Activated CD4-positive, alpha-beta memory T cell treated with anti-CD3 and anti-CD28 coated beads for 36 hours (primary cell): ENCODE measurements at regions of chr7 and their contacts with region 1.

Region 1: DNA sequence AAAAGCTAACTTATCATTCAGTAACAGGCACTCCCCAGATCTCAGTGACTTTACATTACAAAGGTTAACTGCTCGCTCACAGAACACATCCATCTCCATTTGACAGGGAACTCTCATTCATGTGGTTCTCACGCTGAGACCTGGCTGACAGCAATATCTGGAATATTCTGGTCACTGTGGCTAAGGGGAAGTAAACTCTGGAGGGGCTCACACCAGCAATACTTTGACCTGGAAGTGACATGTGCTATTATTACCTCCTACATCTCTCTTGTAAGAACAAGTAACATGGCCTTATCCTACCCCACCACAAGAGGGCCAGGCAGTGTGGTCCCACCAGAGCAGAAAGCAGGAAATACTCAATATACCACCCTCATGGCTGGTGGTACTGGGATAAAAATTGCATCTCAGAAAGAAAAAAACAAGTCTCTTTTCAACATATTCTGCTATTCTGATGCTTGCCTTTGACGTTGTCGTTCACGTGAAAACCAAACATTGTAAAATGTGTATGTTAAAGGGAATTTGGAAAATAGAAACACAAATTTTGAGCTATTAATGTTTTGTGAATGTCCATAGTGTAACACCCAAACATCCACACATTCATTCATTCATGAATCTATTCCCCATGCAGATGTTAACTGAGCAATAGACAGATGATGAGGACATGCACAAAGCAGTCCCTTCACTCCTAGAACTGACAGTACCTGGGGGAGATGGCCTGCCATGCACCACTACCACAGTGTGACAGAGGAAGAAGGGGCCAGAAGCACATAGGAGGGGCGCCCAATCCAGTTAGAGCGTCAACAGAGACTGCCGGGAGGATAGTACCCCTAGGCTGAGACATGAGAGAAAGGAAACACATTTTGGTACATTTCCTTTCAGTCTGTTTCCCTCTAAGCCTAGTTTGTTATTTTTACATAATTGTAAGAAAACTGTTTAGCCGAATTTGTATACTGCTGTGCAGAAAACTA is 166.0 kb upstream of the SP4 start:
- DNase-seq: peak; percentile 55
- H3K4me3 Mint-ChIP-seq: no peak overlapping the region
- H3K27ac Mint-ChIP-seq: no peak overlapping the region
- H3K4me1 Mint-ChIP-seq: peaks cover 8% of the 10 kb centered on the region
- H3K27me3 Mint-ChIP-seq: peaks cover 3% of the 10 kb centered on the region

Region 2: DNA sequence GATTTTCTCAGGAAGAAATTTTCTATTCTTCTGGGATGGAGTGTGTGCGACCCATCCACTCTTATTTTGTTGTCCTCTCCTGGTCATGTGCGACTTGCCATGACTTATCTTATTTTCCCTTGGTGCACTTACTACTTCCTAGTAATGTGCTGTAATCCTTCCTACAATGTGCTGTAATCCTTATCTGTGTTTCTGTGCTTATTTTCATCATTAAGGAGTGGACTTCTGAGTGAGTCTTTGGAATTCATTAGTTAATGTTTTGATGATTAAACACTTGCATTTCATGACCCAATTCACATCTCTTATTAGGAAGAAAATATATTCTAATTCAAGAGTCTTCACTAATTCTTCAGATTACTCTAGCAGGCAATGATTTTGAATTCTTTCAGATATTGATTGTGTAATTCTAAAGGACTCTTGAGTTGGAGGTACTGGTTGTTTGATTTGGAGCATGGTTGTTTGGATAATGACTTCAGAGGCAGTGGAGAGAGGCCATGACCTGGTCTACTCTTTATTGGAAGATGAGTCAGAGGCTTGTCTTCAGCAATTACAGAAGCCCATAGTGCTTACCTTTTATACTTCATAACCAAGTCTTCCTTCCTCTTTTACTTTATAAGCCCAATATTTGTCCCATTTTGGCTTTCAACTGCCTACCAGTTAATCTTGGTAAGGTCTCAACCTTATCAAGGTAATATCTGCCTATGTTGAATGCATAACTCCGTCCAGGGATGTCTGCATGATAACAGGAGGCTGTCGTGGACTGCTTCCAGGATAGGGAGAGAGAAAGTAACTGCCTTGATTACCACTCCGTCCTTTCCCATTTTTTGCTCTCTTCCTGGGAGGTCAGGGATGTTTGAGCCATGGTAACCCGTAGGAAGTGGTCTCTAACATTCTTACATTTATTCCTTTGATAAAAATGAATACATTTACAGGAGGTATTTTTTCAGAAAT is 196.9 kb before region 1 on chr7:
- CTCF ChIA-PET with region 1: no interaction called
- POLR2A ChIA-PET with region 1: no interaction called
- intact Hi-C with region 1: no loop called
- DNase-seq: no peak
- H3K4me3 Mint-ChIP-seq: no peak overlapping the region
- H3K27ac Mint-ChIP-seq: no peak overlapping the region
- H3K4me1 Mint-ChIP-seq: no peaks in the 10 kb centered on the region
- H3K27me3 Mint-ChIP-seq: peaks cover 3% of the 10 kb centered on the region

Region 3: DNA sequence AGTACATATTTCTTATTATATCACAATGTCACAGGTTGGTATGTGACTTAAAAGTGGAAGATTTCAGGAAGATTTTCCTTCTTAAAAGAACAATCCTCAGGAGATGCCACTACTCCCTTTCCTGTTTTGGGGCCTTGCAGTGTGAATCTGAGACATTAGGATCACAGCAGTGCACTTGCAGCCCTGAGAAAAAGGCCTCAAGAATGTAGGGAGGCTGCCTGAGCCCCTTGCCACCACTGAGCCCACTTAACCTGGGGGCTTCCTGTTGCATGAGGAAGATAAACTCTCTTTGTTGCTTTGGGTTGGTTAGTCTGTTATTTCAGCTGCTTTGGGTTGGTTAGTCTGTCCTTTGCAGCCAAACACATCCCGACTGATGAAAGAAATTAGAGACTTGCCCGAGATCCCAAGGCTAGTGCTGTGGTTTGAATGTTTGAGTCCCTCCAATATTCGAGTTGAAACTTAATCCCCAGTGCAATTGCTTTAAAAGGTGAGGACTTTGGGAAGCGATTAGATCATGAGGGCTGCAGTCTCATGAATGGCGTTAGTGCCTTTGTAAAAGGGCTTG is 14.6 kb after region 1 on chr7:
- CTCF ChIA-PET with region 1: interaction called, 14 read pairs
- POLR2A ChIA-PET with region 1: no interaction called
- intact Hi-C with region 1: no loop called
- DNase-seq: no peak
- H3K4me3 Mint-ChIP-seq: no peak overlapping the region
- H3K27ac Mint-ChIP-seq: no peak overlapping the region
- H3K4me1 Mint-ChIP-seq: peaks cover 3% of the 10 kb centered on the region
- H3K27me3 Mint-ChIP-seq: no peaks in the 10 kb centered on the region

Region 4: GRCh38 chr7:21507626-21508343 is 245.9 kb after region 1 on chr7:
- CTCF ChIA-PET with region 1: interaction called, 13 read pairs
- POLR2A ChIA-PET with region 1: no interaction called
- intact Hi-C with region 1: loop called (anchors 1 kb)
- DNase-seq: peak; percentile 29
- H3K4me3 Mint-ChIP-seq: no peak overlapping the region
- H3K27ac Mint-ChIP-seq: no peak overlapping the region
- H3K4me1 Mint-ChIP-seq: no peaks in the 10 kb centered on the region
- H3K27me3 Mint-ChIP-seq: no peaks in the 10 kb centered on the region

Region 5: DNA sequence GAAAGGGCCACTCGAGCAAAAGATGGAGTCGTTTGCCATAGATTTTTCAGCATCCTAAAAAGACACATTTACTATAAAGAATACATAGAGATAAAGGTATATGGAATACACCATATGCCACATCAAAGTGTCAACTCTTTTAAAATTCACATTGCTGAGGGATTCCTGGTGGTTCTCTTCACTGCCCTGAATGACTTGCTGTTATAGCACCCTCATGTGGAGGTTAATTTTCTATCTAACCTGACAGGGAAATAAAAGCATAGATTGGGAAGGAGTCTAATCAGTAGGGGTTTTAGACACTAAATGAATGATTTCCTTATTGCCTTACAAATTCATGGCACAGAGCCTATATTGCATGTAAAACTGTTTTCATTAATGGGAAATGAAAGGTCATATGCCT is 306.9 kb after region 1 on chr7:
- CTCF ChIA-PET with region 1: interaction called, 4 read pairs
- POLR2A ChIA-PET with region 1: no interaction called
- intact Hi-C with region 1: loop called (anchors 2 kb)
- DNase-seq: no peak
- H3K4me3 Mint-ChIP-seq: no peak overlapping the region
- H3K27ac Mint-ChIP-seq: no peak overlapping the region
- H3K4me1 Mint-ChIP-seq: no peaks in the 10 kb centered on the region
- H3K27me3 Mint-ChIP-seq: peaks cover 4% of the 10 kb centered on the region